ENCODE measurements at regions of chr7 and their contacts with region 1.

Region 1: DNA sequence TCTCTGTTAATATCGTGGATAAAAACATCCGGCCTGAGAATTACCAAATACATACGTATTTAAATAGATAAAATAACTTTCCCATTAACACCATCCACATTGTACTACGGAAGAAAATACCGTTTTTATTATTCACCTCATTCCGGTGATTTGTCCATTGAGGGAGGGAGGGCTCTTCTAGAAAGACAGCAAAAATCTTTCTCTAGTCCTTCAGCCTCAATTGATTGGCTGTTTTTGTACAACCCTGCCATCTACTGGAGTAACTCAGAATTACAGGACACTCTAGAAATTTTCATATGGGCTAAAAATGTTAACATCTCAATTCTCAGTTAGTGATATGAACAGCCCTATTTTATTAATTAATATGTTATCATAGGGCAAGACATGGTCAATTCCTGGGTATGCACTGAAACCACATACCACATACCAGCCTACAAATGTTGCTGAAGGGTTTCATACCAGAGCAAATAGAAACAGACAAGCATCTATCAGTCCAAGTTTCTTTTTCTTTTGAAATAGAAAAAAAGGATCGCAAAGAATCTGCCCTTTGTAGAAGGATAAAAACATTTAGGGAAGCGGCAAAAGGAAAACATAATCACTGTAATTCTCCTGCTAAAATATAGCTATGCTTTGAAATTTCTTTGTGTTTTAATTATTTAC is 55.8 kb upstream of the CDCA7L start:
- DNase-seq: no peak
- ATAC-seq: peak; percentile 84
- H3K4me3 Mint-ChIP-seq: peak overlapping the region; percentile 39
- H3K27ac Mint-ChIP-seq: no peak overlapping the region
- H3K4me1 Mint-ChIP-seq: peaks cover 6% of the 10 kb centered on the region
- H3K27me3 Mint-ChIP-seq: peaks cover 3% of the 10 kb centered on the region
- CTCF ChIP-seq: peak; percentile 39

Region 2: DNA sequence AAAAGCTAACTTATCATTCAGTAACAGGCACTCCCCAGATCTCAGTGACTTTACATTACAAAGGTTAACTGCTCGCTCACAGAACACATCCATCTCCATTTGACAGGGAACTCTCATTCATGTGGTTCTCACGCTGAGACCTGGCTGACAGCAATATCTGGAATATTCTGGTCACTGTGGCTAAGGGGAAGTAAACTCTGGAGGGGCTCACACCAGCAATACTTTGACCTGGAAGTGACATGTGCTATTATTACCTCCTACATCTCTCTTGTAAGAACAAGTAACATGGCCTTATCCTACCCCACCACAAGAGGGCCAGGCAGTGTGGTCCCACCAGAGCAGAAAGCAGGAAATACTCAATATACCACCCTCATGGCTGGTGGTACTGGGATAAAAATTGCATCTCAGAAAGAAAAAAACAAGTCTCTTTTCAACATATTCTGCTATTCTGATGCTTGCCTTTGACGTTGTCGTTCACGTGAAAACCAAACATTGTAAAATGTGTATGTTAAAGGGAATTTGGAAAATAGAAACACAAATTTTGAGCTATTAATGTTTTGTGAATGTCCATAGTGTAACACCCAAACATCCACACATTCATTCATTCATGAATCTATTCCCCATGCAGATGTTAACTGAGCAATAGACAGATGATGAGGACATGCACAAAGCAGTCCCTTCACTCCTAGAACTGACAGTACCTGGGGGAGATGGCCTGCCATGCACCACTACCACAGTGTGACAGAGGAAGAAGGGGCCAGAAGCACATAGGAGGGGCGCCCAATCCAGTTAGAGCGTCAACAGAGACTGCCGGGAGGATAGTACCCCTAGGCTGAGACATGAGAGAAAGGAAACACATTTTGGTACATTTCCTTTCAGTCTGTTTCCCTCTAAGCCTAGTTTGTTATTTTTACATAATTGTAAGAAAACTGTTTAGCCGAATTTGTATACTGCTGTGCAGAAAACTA is 739.6 kb before region 1 on chr7:
- CTCF ChIA-PET with region 1: interaction called, 12 read pairs
- POLR2A ChIA-PET with region 1: no interaction called
- intact Hi-C with region 1: loop called (anchors 1 kb)
- DNase-seq: peak; percentile 18
- ATAC-seq: peak; percentile 96
- H3K4me3 Mint-ChIP-seq: no peak overlapping the region
- H3K27ac Mint-ChIP-seq: peak overlapping the region; percentile 6
- H3K4me1 Mint-ChIP-seq: peaks cover 14% of the 10 kb centered on the region
- H3K27me3 Mint-ChIP-seq: no peaks in the 10 kb centered on the region
- CTCF ChIP-seq: no peak

Region 3: GRCh38 chr7:21526007-21526406 is 475.5 kb before region 1 on chr7:
- CTCF ChIA-PET with region 1: no interaction called
- POLR2A ChIA-PET with region 1: no interaction called
- intact Hi-C with region 1: loop called (anchors 1 kb)
- DNase-seq: no peak
- ATAC-seq: no peak
- H3K4me3 Mint-ChIP-seq: no peak overlapping the region
- H3K27ac Mint-ChIP-seq: no peak overlapping the region
- H3K4me1 Mint-ChIP-seq: no peaks in the 10 kb centered on the region
- H3K27me3 Mint-ChIP-seq: no peaks in the 10 kb centered on the region
- CTCF ChIP-seq: no peak

Region 4: DNA sequence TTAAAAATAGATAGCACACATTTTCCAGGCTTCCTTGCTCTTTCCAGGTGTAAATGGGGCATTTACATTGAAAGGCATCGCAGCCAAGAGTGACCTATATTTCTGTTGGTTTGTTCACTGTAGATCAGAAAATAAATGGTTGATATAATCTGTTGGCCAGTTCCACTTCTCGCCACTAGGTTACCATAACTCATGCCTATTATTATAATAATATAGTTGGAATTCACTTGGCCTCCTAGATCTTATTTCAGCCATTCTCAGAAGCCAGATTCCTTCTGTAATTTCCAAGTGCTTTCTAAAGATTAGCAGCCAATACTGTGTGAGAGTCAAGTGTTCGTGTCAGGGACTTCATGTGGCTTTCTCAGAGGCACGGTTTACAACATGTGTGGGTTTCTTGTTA is 279.1 kb before region 1 on chr7:
- CTCF ChIA-PET with region 1: no interaction called
- POLR2A ChIA-PET with region 1: no interaction called
- intact Hi-C with region 1: loop called (anchors 5 kb)
- DNase-seq: no peak
- ATAC-seq: no peak
- H3K4me3 Mint-ChIP-seq: no peak overlapping the region
- H3K27ac Mint-ChIP-seq: no peak overlapping the region
- H3K4me1 Mint-ChIP-seq: no peaks in the 10 kb centered on the region
- H3K27me3 Mint-ChIP-seq: peaks cover 6% of the 10 kb centered on the region
- CTCF ChIP-seq: no peak

Region 5: DNA sequence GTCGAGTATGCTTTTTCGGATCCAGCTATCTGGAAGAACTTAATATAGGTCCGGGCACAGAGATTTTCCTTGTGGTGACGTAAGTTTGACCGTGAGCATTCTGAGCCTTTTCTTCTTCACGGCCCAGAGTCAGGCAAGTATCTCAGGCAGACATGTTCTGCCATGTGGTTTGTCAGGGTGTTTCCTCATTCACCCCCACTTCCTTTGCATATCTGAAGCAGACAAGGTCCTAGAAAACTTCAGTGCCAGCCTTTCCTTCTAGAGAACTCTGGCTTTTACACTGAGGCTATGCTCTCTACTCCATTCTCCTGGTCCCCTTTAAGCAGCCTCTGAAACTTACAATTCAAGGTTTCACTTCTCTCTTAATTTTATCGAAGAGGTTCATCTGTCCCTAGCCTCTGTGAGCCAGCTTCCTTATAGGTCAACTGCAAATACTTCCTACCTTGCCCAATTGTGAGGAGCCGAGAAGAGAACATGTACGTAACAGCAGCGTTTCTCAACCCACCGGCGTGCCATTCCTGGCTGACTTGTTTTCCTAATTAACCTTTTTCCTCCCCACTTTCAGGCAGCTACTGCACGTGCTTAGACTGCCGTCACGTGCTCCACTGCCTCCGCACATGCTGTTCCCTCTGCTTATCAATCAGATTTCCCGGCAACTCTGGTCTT is 103.1 kb before region 1 on chr7:
- CTCF ChIA-PET with region 1: interaction called, 3 read pairs
- POLR2A ChIA-PET with region 1: no interaction called
- intact Hi-C with region 1: loop called (anchors 1 kb)
- DNase-seq: no peak
- ATAC-seq: peak; percentile 92
- H3K4me3 Mint-ChIP-seq: peak overlapping the region; percentile 81
- H3K27ac Mint-ChIP-seq: peak overlapping the region; percentile 97
- H3K4me1 Mint-ChIP-seq: peaks cover 24% of the 10 kb centered on the region
- H3K27me3 Mint-ChIP-seq: no peaks in the 10 kb centered on the region
- CTCF ChIP-seq: no peak

Region 6: DNA sequence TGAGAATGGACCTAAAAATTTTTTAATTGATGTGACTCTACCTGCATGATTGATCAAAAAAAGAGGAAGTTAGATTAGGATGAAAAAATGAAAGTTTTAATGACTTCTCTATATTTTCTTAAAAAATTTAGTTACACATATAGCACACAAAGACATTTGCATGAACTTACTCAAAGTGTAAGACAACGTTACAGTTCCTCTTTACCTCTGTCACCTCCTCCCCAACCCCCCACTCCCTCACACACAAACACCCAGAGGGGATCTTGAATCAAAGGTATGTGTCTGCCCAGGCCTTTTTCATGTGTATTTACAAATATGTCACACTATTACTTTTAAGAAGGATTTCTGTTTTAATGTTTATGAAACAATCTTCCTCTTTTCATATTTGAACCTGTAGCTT is 35.2 kb before region 1 on chr7:
- CTCF ChIA-PET with region 1: no interaction called
- POLR2A ChIA-PET with region 1: no interaction called
- intact Hi-C with region 1: loop called (anchors 1 kb)
- DNase-seq: peak; percentile 31
- ATAC-seq: peak; percentile 97
- H3K4me3 Mint-ChIP-seq: peak overlapping the region; percentile 66
- H3K27ac Mint-ChIP-seq: peak overlapping the region; percentile 87
- H3K4me1 Mint-ChIP-seq: peaks cover 63% of the 10 kb centered on the region
- H3K27me3 Mint-ChIP-seq: no peaks in the 10 kb centered on the region
- CTCF ChIP-seq: no peak